Activated CD8-positive, alpha-beta memory T cell treated with anti-CD3 and anti-CD28 coated beads, Interleukin-2, amount 10 ng/mL, durations not matched to agents 7 days and 5 days (primary cell): ENCODE measurements at regions of chr7 and their contacts with region 1.

Region 1: DNA sequence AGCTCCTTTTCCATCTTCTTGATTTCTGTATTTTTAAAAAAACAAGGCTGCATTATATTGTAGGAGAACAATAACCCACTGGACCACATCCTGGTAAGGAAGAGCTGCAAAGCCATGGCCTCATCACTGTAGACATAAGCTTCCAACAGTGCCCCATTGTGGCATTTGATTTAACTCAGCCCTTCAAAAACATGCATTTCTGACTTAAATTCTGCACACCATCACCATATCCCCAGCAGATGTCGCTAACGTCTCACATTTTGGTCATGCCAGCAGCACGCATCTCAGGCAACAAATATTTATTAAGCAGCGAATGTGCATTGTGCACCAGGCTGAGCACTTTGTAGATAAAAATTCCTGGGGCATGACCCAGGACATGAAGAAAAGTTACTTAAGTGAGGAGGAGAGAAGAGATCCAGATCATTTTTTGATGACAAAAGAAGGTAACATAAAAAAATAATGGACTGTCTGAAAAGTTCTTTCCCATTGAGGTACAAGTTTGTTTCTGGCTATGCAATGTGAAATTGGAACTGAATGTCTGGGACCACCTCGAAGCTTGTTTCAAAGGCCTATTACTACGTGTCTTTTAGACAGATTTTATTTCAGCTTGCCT is 164.6 kb upstream of the CDCA7L start:
- DNase-seq: peak; percentile 77
- ATAC-seq: peak; percentile 91
- H3K4me3 Mint-ChIP-seq: no peak overlapping the region
- H3K27ac Mint-ChIP-seq: no peak overlapping the region
- H3K4me1 Mint-ChIP-seq: peaks cover 6% of the 10 kb centered on the region
- H3K27me3 Mint-ChIP-seq: peaks cover 29% of the 10 kb centered on the region

Region 2: DNA sequence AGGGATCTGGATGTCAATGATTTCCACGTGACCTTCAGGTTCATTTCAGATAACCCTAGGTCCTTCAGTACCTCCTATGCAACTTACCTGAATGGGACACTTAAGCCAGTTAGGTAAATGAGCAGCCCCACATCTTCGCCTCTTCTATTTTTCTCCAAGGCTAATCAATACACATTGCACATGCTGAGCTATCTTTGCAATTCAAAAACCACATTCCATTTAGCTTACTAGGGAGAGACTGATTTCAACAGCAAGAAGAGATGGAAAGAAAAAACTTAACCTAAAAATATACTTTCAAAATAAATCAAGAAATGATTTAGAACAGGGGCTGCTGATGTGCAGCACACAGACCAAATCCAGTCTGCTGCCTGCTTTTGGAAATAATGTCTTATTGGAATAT is 82.9 kb before region 1 on chr7:
- CTCF ChIA-PET with region 1: no interaction called
- DNase-seq: no peak
- ATAC-seq: no peak
- H3K4me3 Mint-ChIP-seq: no peak overlapping the region
- H3K27ac Mint-ChIP-seq: no peak overlapping the region
- H3K4me1 Mint-ChIP-seq: no peaks in the 10 kb centered on the region
- H3K27me3 Mint-ChIP-seq: peaks cover 5% of the 10 kb centered on the region

Region 3: GRCh38 chr7:22292516-22292915 is 182.2 kb after region 1 on chr7:
- CTCF ChIA-PET with region 1: interaction called, 11 read pairs
- DNase-seq: peak; percentile 43
- ATAC-seq: peak; percentile 88
- H3K4me3 Mint-ChIP-seq: no peak overlapping the region
- H3K27ac Mint-ChIP-seq: no peak overlapping the region
- H3K4me1 Mint-ChIP-seq: peaks cover 24% of the 10 kb centered on the region
- H3K27me3 Mint-ChIP-seq: peaks cover 71% of the 10 kb centered on the region

Region 4: DNA sequence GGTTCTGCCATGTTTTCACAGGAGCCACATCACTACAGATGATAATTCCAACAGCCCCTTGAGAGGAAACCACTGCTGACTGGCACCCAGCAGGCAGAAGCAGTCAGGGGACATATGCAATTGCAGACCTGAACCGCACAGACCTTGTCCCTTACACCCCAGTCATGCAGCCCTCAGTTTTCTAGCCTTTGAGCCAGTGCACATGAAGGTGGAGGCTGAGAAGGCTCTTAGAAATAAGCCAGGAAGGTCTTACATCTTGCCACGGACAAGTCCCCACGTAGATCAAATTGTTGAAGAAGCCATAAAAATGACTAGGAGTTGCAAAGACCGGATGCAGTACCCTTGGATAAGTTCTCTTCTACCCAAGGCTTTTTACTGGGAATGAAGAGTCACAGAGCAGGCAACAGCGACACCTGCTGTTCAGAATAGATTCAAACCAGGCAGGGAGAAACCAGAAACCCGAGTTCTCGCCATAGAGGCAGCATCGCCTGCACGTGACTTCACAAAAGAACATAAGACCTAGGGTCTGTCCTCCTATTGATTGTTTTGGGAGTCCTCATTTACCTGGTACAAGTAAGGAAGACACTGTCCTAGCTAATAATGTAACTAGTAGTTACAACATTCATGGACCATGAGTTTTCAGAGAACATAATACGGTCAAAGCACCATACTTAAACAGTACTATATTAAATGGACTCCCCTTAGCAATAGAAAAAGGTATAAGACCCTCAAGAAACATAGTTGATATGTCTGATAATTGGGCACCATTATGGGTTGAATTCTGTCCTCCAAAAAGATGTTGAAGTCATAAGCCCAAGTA is 378.5 kb after region 1 on chr7:
- CTCF ChIA-PET with region 1: interaction called, 46 read pairs
- DNase-seq: peak; percentile 68
- ATAC-seq: peak; percentile 67
- H3K4me3 Mint-ChIP-seq: no peak overlapping the region
- H3K27ac Mint-ChIP-seq: no peak overlapping the region
- H3K4me1 Mint-ChIP-seq: peaks cover 9% of the 10 kb centered on the region
- H3K27me3 Mint-ChIP-seq: peaks cover 24% of the 10 kb centered on the region

Region 5: GRCh38 chr7:22499044-22499443 is 388.7 kb after region 1 on chr7:
- CTCF ChIA-PET with region 1: interaction called, 18 read pairs
- DNase-seq: no peak
- ATAC-seq: no peak
- H3K4me3 Mint-ChIP-seq: no peak overlapping the region
- H3K27ac Mint-ChIP-seq: no peak overlapping the region
- H3K4me1 Mint-ChIP-seq: peaks cover 6% of the 10 kb centered on the region
- H3K27me3 Mint-ChIP-seq: peaks cover 34% of the 10 kb centered on the region